ENCODE measurements at regions of chr1 and their contacts with region 1.

Region 1: DNA sequence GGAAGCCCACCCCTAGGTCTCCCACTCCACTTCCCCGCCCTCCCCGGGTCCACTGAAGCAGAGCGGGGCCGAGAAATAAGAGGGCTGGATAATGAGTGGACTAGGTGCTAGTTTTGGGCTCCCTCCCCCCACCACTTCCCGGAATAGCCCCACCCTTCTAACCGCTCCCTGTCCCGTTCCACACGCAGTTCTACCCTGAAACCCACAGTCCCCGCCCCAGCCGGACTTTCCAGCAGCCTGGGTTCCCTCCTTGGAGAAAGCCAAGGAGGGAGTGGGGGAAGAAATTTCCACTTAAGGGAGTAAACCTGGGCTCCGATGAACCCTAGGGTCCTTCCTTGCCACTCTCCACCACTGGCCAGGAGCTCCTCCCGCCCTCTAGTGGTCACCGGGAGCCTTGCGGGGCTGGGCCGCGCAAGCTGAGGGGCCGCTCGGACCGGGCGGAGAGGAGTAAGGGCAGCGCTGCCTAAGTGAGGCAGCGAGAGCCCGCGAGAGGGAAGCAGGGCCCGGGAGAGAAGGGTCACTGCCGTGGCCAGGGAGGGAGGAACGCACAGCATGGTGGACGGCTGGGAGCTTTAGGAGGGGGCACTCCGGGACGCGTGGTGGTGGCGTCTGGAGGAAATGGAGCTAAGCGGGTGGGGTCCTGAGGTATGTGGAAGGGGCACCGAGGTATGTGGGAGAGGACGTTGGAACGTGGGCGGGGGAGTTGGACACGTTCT is 14.3 kb downstream of the THBS3 start:
- DNase-seq: peak; percentile 84
- ATAC-seq: peak; percentile 51
- H3K4me3 Mint-ChIP-seq: peak overlapping the region; percentile 92
- H3K27ac Mint-ChIP-seq: peak overlapping the region; percentile 97
- H3K4me1 Mint-ChIP-seq: peaks cover 27% of the 10 kb centered on the region
- H3K27me3 Mint-ChIP-seq: no peaks in the 10 kb centered on the region

Region 2: GRCh38 chr1:155145491-155145890 is 47.9 kb before region 1 on chr1:
- POLR2A ChIA-PET with region 1: no interaction called
- DNase-seq: no peak
- ATAC-seq: no peak
- H3K4me3 Mint-ChIP-seq: no peak overlapping the region
- H3K27ac Mint-ChIP-seq: no peak overlapping the region
- H3K4me1 Mint-ChIP-seq: peaks cover 6% of the 10 kb centered on the region
- H3K27me3 Mint-ChIP-seq: peaks cover 22% of the 10 kb centered on the region

Region 3: GRCh38 chr1:155208541-155209311 is 15.3 kb after region 1 on chr1 and contains the start of gene MTX1:
- POLR2A ChIA-PET with region 1: interaction called, 65 read pairs
- DNase-seq: peak; percentile 89
- ATAC-seq: peak; percentile 74
- H3K4me3 Mint-ChIP-seq: peak within 1 kb of the TSS; percentile 90
- H3K27ac Mint-ChIP-seq: peak within 1 kb of the TSS; percentile 90
- H3K4me1 Mint-ChIP-seq: peaks cover 25% of the 10 kb centered on the region
- H3K27me3 Mint-ChIP-seq: no peaks in the 10 kb centered on the region
- total RNA-seq, gene MTX1: 31.5 to 31.7 TPM

Region 4: GRCh38 chr1:155218854-155219591 is 25.6 kb after region 1 on chr1:
- POLR2A ChIA-PET with region 1: interaction called, 12 read pairs
- DNase-seq: no peak
- ATAC-seq: no peak
- H3K4me3 Mint-ChIP-seq: peak overlapping the region; percentile 68
- H3K27ac Mint-ChIP-seq: peak overlapping the region; percentile 91
- H3K4me1 Mint-ChIP-seq: peaks cover 24% of the 10 kb centered on the region
- H3K27me3 Mint-ChIP-seq: no peaks in the 10 kb centered on the region

Region 5: DNA sequence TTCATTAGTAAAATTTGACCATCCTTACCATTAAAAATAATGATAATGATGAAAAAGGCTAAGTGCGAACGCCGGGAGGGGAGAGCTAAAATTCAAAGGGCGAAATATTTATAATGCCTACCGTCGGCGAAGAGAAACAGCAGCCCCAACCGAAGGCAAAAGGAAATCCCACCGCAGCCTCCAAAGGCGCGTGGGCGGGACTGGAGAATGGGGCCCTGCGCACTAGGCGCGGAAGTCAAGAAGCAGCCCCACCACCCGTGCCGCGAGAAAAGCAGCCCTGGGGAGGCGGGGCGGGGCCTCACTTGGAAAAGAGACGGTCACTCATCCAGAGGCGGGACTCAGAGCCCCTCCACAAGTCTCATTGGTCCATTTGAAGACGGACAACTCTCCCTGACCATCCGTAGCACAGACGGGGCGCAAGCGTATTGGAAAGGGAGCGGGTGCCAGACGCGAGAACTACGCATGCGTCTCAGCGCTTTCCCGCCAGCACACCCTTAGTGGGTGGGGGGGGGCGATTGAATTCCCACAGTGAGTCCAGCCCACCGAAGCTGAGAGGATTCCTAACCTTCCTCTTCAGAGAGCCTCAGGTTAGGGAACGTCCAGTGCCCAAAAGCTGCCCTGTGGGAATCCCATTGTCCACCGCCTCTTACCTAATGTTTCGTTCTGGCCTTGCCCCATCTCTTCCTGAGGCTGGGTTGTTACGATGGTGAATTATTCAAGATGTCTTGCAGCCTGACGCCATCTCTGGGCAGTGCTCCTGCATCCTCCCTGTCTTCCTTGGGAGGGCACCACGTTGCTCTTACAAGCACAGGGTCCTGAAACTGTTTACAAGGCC is 34.0 kb after region 1 on chr1:
- POLR2A ChIA-PET with region 1: interaction called, 28 read pairs
- DNase-seq: peak; percentile 96
- ATAC-seq: peak; percentile 96
- H3K4me3 Mint-ChIP-seq: peak overlapping the region; percentile 95
- H3K27ac Mint-ChIP-seq: peak overlapping the region; percentile 92
- H3K4me1 Mint-ChIP-seq: peaks cover 24% of the 10 kb centered on the region
- H3K27me3 Mint-ChIP-seq: no peaks in the 10 kb centered on the region

Region 6: GRCh38 chr1:155244368-155245162 is 51.1 kb after region 1 on chr1:
- POLR2A ChIA-PET with region 1: interaction called, 18 read pairs
- DNase-seq: peak; percentile 96
- ATAC-seq: peak; percentile 97
- H3K4me3 Mint-ChIP-seq: peak overlapping the region; percentile 85
- H3K27ac Mint-ChIP-seq: peak overlapping the region; percentile 95
- H3K4me1 Mint-ChIP-seq: peaks cover 49% of the 10 kb centered on the region
- H3K27me3 Mint-ChIP-seq: no peaks in the 10 kb centered on the region

Region 7: GRCh38 chr1:155308493-155309422 is 115.3 kb after region 1 on chr1 and contains the start of gene FDPS:
- POLR2A ChIA-PET with region 1: no interaction called
- DNase-seq: peak; percentile 91
- ATAC-seq: peak; percentile 100
- H3K4me3 Mint-ChIP-seq: peak within 1 kb of the TSS; percentile 98
- H3K27ac Mint-ChIP-seq: peak within 1 kb of the TSS; percentile 99
- H3K4me1 Mint-ChIP-seq: peaks cover 26% of the 10 kb centered on the region
- H3K27me3 Mint-ChIP-seq: peaks cover 2% of the 10 kb centered on the region
- total RNA-seq, gene FDPS: 238 to 242 TPM

Measured in activated naive CD8-positive, alpha-beta T cell treated with anti-CD3 and anti-CD28 coated beads, Interleukin-2, amount 10 ng/mL, durations not matched to agents 7 days and 5 days (primary cell).